ENCODE measurements at regions of chr5 and their contacts with region 1.

Region 1: DNA sequence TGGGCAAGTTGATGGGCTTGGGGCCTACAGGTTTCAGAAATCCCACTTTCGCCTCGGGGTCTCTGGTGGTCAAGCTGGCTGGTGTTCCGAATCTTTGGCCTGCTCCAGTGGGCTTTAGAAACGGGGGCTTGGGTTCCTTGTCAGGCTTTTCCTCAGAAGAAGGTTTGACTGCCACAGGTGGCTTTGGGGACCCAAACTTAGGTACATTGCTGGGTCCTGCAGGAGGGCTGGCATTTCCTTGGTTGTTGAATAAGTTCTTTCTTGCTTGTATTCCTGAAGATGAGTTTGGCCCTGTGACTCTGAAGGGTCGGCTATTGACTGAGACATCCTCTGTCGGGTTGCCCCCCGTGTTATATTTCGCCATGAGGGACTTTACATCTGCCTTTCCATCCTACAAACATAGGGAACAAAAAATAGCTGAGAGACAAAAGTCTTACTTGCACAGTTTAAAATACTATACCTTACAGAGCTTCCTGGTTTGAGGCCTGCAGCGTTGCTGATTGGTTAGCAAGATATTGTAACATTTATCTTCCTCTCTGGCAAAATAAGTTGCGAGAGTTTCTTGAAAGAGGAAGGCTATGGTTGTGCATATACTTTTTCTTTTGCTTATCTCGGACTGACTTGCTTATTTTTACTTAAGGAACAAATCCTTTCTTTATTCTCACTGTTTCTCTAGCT is 16.6 kb downstream of the FYB1 start:
- DNase-seq: peak; percentile 70
- H3K4me3 Mint-ChIP-seq: peak overlapping the region; percentile 93
- H3K27ac Mint-ChIP-seq: peak overlapping the region; percentile 93
- H3K4me1 Mint-ChIP-seq: peaks cover 38% of the 10 kb centered on the region
- H3K27me3 Mint-ChIP-seq: no peaks in the 10 kb centered on the region

Region 2: GRCh38 chr5:37370864-37371726 is 1831.6 kb before region 1 on chr5 and contains the start of gene NUP155:
- CTCF ChIA-PET with region 1: no interaction called
- POLR2A ChIA-PET with region 1: interaction called, 12 read pairs
- DNase-seq: peak; percentile 94
- H3K4me3 Mint-ChIP-seq: peak within 1 kb of the TSS; percentile 99
- H3K27ac Mint-ChIP-seq: peak within 1 kb of the TSS; percentile 99
- H3K4me1 Mint-ChIP-seq: peaks cover 42% of the 10 kb centered on the region
- H3K27me3 Mint-ChIP-seq: no peaks in the 10 kb centered on the region
- total RNA-seq, gene NUP155: 47.5 to 59.1 TPM

Region 3: GRCh38 chr5:39187831-39188731 is 14.7 kb before region 1 on chr5:
- CTCF ChIA-PET with region 1: interaction called, 20 read pairs
- POLR2A ChIA-PET with region 1: interaction called, 3 read pairs
- DNase-seq: peak; percentile 5
- H3K4me3 Mint-ChIP-seq: peak overlapping the region; percentile 77
- H3K27ac Mint-ChIP-seq: peak overlapping the region; percentile 86
- H3K4me1 Mint-ChIP-seq: peaks cover 88% of the 10 kb centered on the region
- H3K27me3 Mint-ChIP-seq: no peaks in the 10 kb centered on the region

Measured in activated CD4-positive, alpha-beta T cell treated with anti-CD3 and anti-CD28 coated beads, Interleukin-2, amount 10 ng/mL, durations not matched to agents 7 days and 5 days (primary cell).